ENCODE measurements at regions of chr14 and their contacts with region 1.

Region 1: GRCh38 chr14:68322940-68323620 is 469.8 kb downstream of the ZFP36L1 start:
- DNase-seq: no peak
- H3K4me3 ChIP-seq: no peak overlapping the region
- H3K27ac ChIP-seq: peak overlapping the region; percentile 35 to 38
- H3K4me1 ChIP-seq: peaks cover 0 to 28% (median 5%) of the 10 kb centered on the region in 4 donors
- H3K27me3 ChIP-seq: no peaks in the 10 kb centered on the region
- CTCF ChIP-seq: no peak

Region 2: DNA sequence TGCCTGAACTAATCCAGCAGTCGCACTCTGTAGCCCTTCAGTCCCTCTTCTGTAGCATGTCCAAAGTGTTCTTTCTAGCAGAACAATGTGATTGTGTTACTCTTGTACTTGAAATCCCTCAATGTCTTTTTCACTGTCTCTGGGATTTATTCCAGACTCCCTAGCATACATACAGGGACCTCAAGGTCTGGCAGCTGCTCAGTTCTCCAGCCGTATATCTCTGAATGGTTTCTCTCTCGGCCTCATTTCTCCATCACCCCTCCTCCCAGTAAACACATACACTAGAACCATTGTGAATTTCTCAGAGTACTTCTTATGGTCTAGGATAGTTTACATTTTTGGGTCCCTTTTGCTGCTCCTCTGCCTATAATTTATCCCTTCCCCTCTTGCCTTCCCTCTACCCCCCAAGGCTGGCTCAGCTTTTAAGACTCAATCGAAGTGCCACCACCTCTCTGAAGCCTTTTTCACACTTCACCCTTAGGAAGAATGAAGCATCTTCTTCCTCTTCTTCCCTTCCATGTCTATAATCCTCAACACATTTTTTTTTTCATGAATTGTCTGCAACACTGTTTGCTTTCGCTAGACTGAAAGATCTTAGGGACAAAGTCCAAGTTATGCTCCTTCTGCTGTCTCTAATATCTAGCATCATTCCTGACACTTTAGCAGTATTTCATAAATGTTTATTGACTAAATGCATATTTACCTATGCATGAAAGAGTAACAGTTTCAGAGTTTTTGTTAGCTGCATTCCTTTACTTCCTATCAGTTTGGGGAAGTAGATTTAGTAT is 23.7 kb after region 1 on chr14:
- intact Hi-C with region 1: loop called (anchors 2 kb)
- DNase-seq: no peak
- H3K4me3 ChIP-seq: no peak overlapping the region
- H3K27ac ChIP-seq: no peak overlapping the region
- H3K4me1 ChIP-seq: peaks cover 0 to 21% (median 0%) of the 10 kb centered on the region in 4 donors
- H3K27me3 ChIP-seq: no peaks in the 10 kb centered on the region
- CTCF ChIP-seq: no peak

Region 3: DNA sequence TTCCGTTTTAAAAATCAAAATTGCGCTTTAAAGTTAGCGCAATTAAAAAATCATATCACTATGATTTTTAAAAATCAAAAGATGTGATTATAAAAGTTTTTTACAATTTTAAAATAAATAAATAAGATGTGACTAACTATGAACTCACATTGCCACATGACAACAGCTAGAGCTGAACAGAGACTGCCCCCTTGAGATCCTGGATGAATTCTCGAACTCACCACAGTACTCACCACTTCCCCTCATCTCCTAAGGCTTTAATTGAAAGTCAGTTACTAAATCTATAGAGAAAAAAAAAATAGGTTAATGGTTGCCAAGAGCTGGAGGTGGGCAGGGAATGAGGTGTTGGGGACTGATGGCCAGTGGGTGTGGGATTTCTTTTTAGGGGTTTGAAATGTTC is 85.6 kb after region 1 on chr14:
- intact Hi-C with region 1: no loop called
- DNase-seq: no peak
- H3K4me3 ChIP-seq: no peak overlapping the region
- H3K27ac ChIP-seq: no peak overlapping the region
- H3K4me1 ChIP-seq: peaks cover 0 to 11% (median 4%) of the 10 kb centered on the region in 4 donors
- H3K27me3 ChIP-seq: no peaks in the 10 kb centered on the region
- CTCF ChIP-seq: peak in 1 of 2 experiments; percentile 18

Region 4: GRCh38 chr14:68695326-68695768 is 372.3 kb after region 1 on chr14:
- intact Hi-C with region 1: no loop called
- DNase-seq: peak; percentile 78 to 84
- H3K4me3 ChIP-seq: no peak overlapping the region
- H3K27ac ChIP-seq: peak overlapping the region; percentile 46 to 56
- H3K4me1 ChIP-seq: peaks cover 0 to 41% (median 19%) of the 10 kb centered on the region in 4 donors
- H3K27me3 ChIP-seq: no peaks in the 10 kb centered on the region
- CTCF ChIP-seq: no peak